AG04450 (cell line): ENCODE measurements at regions of chrX and their contacts with region 1.

Region 1: GRCh38 chrX:96372313-96373046 is 312.2 kb upstream of the DIAPH2 start:
- DNase-seq: peak; percentile 24
- H3K4me3 ChIP-seq: no peak overlapping the region
- H3K27ac ChIP-seq: no peak overlapping the region
- H3K27me3 ChIP-seq: no peaks in the 10 kb centered on the region
- CTCF ChIP-seq: peak; percentile 71

Region 2: GRCh38 chrX:96563663-96564062 is 191.2 kb after region 1 on chrX:
- CTCF ChIA-PET with region 1: interaction called, 10 read pairs
- POLR2A ChIA-PET with region 1: no interaction called
- DNase-seq: peak; percentile 16
- H3K4me3 ChIP-seq: no peak overlapping the region
- H3K27ac ChIP-seq: no peak overlapping the region
- H3K27me3 ChIP-seq: no peaks in the 10 kb centered on the region
- CTCF ChIP-seq: no peak